IMR-90 (cell line): ENCODE measurements at regions of chr20 and their contacts with region 1.

Region 1: DNA sequence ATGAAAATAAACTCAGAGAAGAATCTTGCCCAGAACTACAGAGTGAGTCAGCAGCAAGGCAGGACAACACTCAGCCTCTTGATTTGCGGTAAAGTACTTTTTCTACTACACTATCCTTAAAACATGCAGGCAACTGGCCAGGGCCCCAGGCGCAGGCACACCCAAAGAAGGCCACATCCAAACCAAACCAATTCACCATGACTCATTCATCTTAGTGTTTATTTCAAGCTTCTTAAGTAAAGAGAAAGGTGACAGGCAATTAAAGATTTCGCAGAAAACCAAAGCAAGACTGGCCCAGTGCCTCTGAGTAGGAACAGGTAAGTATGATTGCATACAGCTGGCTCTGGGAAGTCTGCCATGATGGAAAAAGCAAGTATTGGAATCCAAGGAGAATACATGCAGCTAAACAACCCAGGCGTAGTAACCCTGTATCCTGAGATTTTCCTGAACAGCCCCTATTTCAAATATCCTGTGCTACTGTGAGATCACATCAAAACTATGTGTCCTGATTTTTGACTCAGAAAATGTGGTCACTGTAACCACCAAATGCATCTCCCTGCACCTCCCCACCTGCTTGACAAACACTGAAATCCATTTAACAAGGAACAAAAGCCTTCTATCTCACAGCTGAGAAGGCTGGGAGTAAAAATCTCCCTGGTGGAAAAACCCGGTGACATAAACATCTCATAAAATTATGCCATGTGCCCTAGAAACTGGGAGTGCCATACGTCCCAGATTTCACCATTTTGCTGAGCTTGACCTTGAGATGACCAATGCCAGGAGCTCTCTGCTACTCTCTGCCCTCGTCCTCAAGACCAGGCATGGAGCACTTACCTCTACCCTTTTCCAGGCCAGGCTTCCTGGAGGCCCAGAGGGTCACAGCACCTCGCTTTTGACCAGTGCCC is 12.4 kb downstream of the WFDC3 start:
- DNase-seq: peak; percentile 100
- ATAC-seq: peak; percentile 80
- H3K4me3 ChIP-seq: no peak overlapping the region
- H3K27ac ChIP-seq: peak overlapping the region; percentile 96
- H3K4me1 ChIP-seq: peaks cover 43% of the 10 kb centered on the region
- H3K27me3 ChIP-seq: peaks cover 15% of the 10 kb centered on the region
- CTCF ChIP-seq: no peak
- POLR2A ChIP-seq: no peak
- RAD21 ChIP-seq: no peak

Region 2: GRCh38 chr20:45337367-45338120 is 441.7 kb before region 1 on chr20:
- CTCF ChIA-PET with region 1: no interaction called
- POLR2A ChIA-PET with region 1: no interaction called
- dilution Hi-C with region 1: no loop called
- in situ Hi-C with region 1: no loop called
- intact Hi-C with region 1: loop called (anchors 5 kb)
- DNase-seq: peak; percentile 94
- ATAC-seq: peak; percentile 72
- H3K4me3 ChIP-seq: no peak overlapping the region
- H3K27ac ChIP-seq: peak overlapping the region; percentile 97
- H3K4me1 ChIP-seq: peaks cover 48% of the 10 kb centered on the region
- H3K27me3 ChIP-seq: no peaks in the 10 kb centered on the region
- CTCF ChIP-seq: no peak
- POLR2A ChIP-seq: no peak
- RAD21 ChIP-seq: no peak

Region 3: GRCh38 chr20:45725134-45725533 is 54.1 kb before region 1 on chr20:
- CTCF ChIA-PET with region 1: no interaction called
- POLR2A ChIA-PET with region 1: no interaction called
- dilution Hi-C with region 1: no loop called
- in situ Hi-C with region 1: no loop called
- intact Hi-C with region 1: no loop called
- DNase-seq: no peak
- ATAC-seq: no peak
- H3K4me3 ChIP-seq: no peak overlapping the region
- H3K27ac ChIP-seq: no peak overlapping the region
- H3K4me1 ChIP-seq: no peaks in the 10 kb centered on the region
- H3K27me3 ChIP-seq: no peaks in the 10 kb centered on the region; the same call in 1 of the 2 replicates
- CTCF ChIP-seq: no peak
- POLR2A ChIP-seq: no peak
- RAD21 ChIP-seq: no peak

Region 4: DNA sequence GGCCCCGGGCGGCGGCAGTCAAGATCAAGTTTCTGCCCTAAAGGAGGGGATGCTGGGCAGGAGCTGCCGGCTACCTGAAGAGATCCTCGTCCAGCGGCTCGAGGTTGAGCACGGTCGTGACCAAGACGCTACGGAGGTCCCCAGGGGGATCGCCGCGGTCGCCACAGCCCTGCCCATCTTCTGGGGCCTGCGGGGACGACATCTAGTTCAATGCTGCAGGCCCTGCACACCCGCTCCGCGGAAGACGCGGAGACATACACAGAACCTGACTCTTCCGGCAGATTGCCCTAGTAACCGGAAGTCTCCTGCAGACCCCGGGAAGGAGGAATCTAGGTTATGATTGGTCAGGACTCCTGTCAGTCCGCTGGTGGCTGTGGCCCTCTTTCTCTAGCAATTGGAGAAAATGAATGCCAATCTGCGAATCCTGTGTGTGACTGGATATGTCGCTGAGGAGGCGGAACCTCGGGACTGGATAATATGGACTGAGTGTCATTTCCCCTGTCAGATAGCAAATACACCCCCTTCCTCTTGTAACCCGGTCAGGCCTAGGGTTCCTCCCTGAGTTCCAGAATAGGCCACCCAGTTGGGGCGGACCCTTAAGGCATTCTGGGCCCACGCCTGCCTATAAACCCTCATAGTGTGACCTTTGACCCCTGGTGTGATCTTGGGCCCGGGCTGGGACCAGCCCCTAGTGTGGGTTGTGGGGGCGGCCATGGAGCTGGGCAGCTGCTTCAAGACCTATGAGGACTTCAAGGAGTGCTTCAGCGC is 78.0 kb after region 1 on chr20 and contains the starts of genes ACOT8 and ZSWIM3:
- CTCF ChIA-PET with region 1: no interaction called
- POLR2A ChIA-PET with region 1: no interaction called
- dilution Hi-C with region 1: no loop called
- in situ Hi-C with region 1: no loop called
- intact Hi-C with region 1: loop called (anchors 2 kb)
- DNase-seq: peak; percentile 100
- ATAC-seq: peak; percentile 99
- H3K4me3 ChIP-seq: peak within 1 kb of the TSS; percentile 77
- H3K27ac ChIP-seq: peak within 1 kb of the TSS; percentile 78
- H3K4me1 ChIP-seq: peaks cover 8% of the 10 kb centered on the region; the same call in 1 of the 2 replicates
- H3K27me3 ChIP-seq: no peaks in the 10 kb centered on the region
- CTCF ChIP-seq: no peak
- POLR2A ChIP-seq: 0 out of 2 replicates have a peak, but pooled peaks have one; percentile 18
- RAD21 ChIP-seq: no peak
- total RNA-seq, gene ACOT8: 27.8 and 29.8 TPM in 2 replicates
- total RNA-seq, gene ZSWIM3: 8.1 and 8.6 TPM in 2 replicates